IMR-90 (cell line): ENCODE measurements at regions of chr2 and their contacts with region 1.

Region 1: DNA sequence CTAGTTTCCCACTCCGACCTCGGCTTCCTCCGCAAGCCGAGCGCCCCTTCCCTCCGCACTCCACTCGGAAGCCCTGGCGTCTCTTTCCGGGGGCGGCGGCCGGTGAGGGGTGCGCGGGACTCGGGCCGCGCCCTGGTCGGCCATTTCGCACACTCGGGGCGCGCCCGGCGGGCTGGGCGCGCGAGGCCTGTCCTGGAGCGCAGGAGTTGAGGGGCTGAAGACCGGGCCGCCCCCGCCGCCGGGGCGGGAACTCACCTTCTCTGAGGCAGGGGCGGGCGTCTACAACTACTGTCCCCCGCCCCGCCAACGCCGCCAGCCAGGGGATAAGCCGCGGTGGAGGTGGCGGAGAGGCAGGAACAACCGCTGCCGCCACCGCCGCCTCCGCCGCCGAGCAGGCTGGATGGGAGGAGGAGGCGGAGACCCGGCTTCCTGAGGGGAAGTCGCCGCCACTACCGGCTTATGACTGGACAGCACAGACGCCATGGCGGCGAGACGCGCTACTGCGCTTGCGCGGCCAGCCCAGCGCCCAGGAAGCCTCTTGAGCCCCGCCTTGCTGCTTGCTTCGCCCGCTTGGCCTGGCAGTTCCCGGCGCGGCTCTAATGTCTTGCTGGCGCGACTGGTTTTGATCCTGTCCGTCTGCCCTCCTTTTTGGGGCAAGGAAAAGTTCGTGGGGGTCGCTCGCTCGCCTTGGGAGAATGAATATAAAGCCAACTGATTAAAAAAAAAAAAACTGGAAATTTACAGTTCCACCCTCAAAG is at the start of gene KRCC1:
- DNase-seq: peak; percentile 95
- ATAC-seq: peak; percentile 97
- H3K4me3 ChIP-seq: peak within 1 kb of the TSS; percentile 95
- H3K27ac ChIP-seq: peak within 1 kb of the TSS; percentile 88
- H3K4me1 ChIP-seq: peaks cover 11% of the 10 kb centered on the region
- H3K27me3 ChIP-seq: no peaks in the 10 kb centered on the region
- CTCF ChIP-seq: no peak
- POLR2A ChIP-seq: peak; percentile 92
- RAD21 ChIP-seq: no peak
- total RNA-seq, gene KRCC1: 16.5 and 22.8 TPM in 2 replicates

Region 2: GRCh38 chr2:88011011-88011410 is 44.5 kb before region 1 on chr2:
- CTCF ChIA-PET with region 1: no interaction called
- POLR2A ChIA-PET with region 1: no interaction called
- dilution Hi-C with region 1: no loop called
- in situ Hi-C with region 1: no loop called
- intact Hi-C with region 1: loop called (anchors 5 kb)
- DNase-seq: no peak
- ATAC-seq: no peak
- H3K4me3 ChIP-seq: no peak overlapping the region
- H3K27ac ChIP-seq: no peak overlapping the region
- H3K4me1 ChIP-seq: no peaks in the 10 kb centered on the region
- H3K27me3 ChIP-seq: no peaks in the 10 kb centered on the region
- CTCF ChIP-seq: no peak
- POLR2A ChIP-seq: no peak
- RAD21 ChIP-seq: no peak

Region 3: GRCh38 chr2:88038263-88039105 is 17.1 kb before region 1 on chr2:
- CTCF ChIA-PET with region 1: interaction called, 3 read pairs
- POLR2A ChIA-PET with region 1: no interaction called
- dilution Hi-C with region 1: no loop called
- in situ Hi-C with region 1: no loop called
- intact Hi-C with region 1: loop called (anchors 1 kb)
- DNase-seq: peak; percentile 97
- ATAC-seq: peak; percentile 96
- H3K4me3 ChIP-seq: no peak overlapping the region
- H3K27ac ChIP-seq: peak overlapping the region; percentile 66; the same call in 1 of the 2 replicates
- H3K4me1 ChIP-seq: peaks cover 2% of the 10 kb centered on the region; the same call in 1 of the 2 replicates
- H3K27me3 ChIP-seq: no peaks in the 10 kb centered on the region
- CTCF ChIP-seq: no peak
- POLR2A ChIP-seq: no peak
- RAD21 ChIP-seq: no peak

Region 4: DNA sequence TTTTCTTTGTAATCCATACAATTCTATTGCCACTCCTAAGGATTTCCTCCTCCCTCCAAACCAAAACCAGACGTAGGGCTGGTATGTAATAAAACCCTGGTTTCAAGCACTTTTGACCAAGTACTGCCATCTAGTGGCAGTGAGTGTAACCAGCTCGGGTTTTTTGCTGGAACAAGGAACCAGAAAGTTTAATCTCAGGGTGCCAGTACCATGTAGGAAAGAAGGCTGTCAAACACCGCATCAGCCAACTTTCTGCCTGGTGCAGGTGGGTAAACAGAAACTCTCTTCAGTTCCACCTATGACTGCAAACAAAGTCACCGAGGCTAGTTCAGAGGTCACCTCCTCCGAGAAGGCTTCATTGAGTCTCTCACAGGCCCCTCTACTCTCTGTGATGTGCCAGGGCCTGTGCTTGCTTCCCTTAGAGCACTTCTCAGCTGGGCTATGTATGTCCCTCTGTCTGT is 104.4 kb after region 1 on chr2:
- CTCF ChIA-PET with region 1: interaction called, 38 read pairs
- POLR2A ChIA-PET with region 1: no interaction called
- dilution Hi-C with region 1: no loop called
- in situ Hi-C with region 1: loop called (anchors 5 kb)
- intact Hi-C with region 1: loop called (anchors 1 kb)
- DNase-seq: peak; percentile 67
- ATAC-seq: peak; percentile 90
- H3K4me3 ChIP-seq: no peak overlapping the region
- H3K27ac ChIP-seq: no peak overlapping the region
- H3K4me1 ChIP-seq: no peaks in the 10 kb centered on the region
- H3K27me3 ChIP-seq: peaks cover 3% of the 10 kb centered on the region; the same call in 1 of the 2 replicates
- CTCF ChIP-seq: peak; percentile 87
- POLR2A ChIP-seq: no peak
- RAD21 ChIP-seq: peak; percentile 87

Region 5: DNA sequence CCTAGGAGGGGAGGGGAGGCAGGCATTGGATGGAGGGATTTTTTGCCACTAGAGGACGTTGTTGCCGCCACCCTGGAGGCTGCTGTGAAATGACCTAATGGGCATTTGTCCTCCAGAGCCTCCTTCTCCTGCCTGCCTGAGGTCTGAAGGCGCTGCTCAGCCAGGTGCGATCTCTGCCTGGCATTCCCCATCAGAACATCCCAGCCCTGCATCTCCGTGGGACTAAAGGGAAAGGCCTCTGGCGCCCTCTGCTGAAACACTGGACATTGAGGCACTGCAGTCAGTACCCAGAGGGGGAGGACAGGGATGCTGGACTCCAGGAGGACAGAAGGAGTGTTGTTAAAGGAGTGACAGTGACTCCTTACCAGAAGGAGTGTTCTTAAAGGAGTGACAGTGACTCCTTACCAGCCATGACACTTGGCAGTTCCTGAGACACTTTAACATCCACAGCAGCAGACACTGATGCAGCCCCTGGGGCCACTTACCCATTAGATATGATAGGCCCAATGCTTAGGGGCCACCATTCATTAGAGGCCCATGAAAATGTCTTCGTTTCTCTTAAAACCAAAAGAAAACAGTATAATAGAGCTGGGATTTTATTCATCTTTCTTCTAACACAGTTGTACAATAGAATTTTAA is 131.6 kb after region 1 on chr2:
- CTCF ChIA-PET with region 1: interaction called, 3 read pairs
- POLR2A ChIA-PET with region 1: no interaction called
- dilution Hi-C with region 1: no loop called
- in situ Hi-C with region 1: no loop called
- intact Hi-C with region 1: loop called (anchors 1 kb)
- DNase-seq: peak; percentile 21
- ATAC-seq: 0 out of 2 replicates have a peak, but pooled peaks have one; percentile 67
- H3K4me3 ChIP-seq: no peak overlapping the region
- H3K27ac ChIP-seq: no peak overlapping the region
- H3K4me1 ChIP-seq: no peaks in the 10 kb centered on the region
- H3K27me3 ChIP-seq: no peaks in the 10 kb centered on the region
- CTCF ChIP-seq: peak; percentile 55
- POLR2A ChIP-seq: no peak
- RAD21 ChIP-seq: peak; percentile 39

Region 6: DNA sequence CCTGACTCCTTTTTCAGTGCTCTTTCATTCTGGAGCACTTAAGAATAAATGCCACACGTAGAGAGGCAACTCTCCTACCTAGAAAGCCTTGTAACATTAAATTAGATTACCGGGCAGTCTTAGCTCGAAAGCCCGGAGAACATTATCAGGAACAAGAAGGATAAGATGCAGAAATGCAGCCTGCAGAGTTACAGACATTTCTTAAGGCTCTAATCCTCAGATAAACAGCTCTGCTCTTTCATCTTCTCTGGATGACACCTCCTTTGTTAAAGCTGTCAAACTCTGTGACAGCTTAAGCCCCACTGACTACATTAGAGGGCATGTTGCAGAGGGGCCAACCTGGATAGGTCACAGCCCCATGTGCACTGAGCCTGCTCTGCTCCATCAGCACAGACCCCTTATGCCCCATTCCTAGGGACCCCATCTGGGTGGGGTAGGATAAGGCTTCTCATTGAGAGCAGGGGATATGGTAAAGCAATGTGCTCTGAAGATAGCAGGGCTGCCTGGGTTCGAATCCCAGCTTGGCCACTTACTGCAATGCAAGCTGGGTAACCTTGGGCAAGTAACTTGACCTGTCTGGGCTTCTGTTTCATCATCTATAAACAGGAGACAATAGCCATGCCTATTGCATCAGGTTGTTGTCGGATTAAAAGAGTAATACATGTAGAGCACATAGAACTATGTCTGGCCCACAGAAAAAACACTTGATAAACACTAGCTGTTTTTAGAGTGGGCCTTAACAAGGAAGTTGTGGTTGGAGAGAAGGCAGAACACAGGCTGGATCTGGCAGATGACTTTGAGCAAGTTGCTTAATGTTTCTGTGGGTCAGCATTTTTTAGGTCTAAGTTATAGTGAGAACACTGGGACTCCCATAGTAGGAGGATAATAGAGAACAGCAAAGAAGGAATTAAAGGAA is 226.0 kb after region 1 on chr2:
- CTCF ChIA-PET with region 1: no interaction called
- POLR2A ChIA-PET with region 1: no interaction called
- dilution Hi-C with region 1: no loop called
- in situ Hi-C with region 1: no loop called
- intact Hi-C with region 1: no loop called
- DNase-seq: no peak
- ATAC-seq: no peak
- H3K4me3 ChIP-seq: no peak overlapping the region
- H3K27ac ChIP-seq: no peak overlapping the region
- H3K4me1 ChIP-seq: no peaks in the 10 kb centered on the region
- H3K27me3 ChIP-seq: no peaks in the 10 kb centered on the region; the same call in 1 of the 2 replicates
- CTCF ChIP-seq: no peak
- POLR2A ChIP-seq: no peak
- RAD21 ChIP-seq: no peak

Region 7: GRCh38 chr2:88669371-88670214 is 614.0 kb after region 1 on chr2:
- CTCF ChIA-PET with region 1: no interaction called
- POLR2A ChIA-PET with region 1: no interaction called
- dilution Hi-C with region 1: no loop called
- in situ Hi-C with region 1: loop called (anchors 25 kb)
- intact Hi-C with region 1: no loop called
- DNase-seq: peak; percentile 52
- ATAC-seq: peak; percentile 78
- H3K4me3 ChIP-seq: no peak overlapping the region
- H3K27ac ChIP-seq: no peak overlapping the region
- H3K4me1 ChIP-seq: no peaks in the 10 kb centered on the region
- H3K27me3 ChIP-seq: peaks cover 10% of the 10 kb centered on the region
- CTCF ChIP-seq: peak; percentile 67
- POLR2A ChIP-seq: no peak
- RAD21 ChIP-seq: peak; percentile 77